Naive thymus-derived CD4-positive, alpha-beta T cell (primary cell): ENCODE measurements at regions of chr11 and their contacts with region 1.

Region 1: DNA sequence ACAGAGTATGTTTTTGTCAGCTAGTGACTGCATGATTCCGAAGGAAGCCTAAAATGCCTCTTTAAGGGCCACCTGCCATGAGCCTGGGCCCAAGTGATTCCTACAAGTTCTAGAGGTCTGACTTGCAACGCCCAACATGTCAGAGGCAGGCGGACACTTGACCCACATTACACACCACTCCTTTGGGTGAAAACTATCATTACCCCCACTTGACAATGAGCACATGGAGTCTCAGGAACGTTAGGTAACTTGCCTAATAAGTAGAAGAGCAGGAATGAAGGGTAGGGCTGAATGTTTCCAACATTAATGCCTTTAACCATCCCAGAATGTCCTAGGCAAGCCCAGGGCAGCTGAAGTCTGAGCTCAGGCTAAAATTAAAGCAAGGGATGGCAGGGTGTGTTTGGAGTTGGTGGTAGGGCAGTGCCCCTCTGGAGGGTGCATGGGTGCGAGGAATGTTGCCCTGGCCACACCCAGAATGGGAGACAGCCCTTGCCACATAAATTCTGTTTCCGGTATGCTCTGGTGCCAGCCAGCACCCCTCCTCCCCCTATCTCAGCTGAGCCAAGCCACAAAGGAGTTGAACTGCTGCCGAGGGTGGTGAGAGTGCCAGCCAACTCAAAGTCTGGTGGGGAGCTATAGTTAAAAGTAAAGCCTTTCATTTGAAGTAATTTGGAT is 2.5 kb downstream of the PLAAT2 start:
- DNase-seq: peak in 7 of 9 donors; percentile 45 to 61 (median 51)
- ATAC-seq: peak; percentile 80
- H3K4me3 ChIP-seq: no peak overlapping the region
- H3K4me3 Mint-ChIP-seq: peak overlapping the region in 9 of 10 donors; percentile 66 to 80 (median 79)
- H3K27ac ChIP-seq: peak overlapping the region; percentile 56
- H3K27ac Mint-ChIP-seq: peak overlapping the region; percentile 16 to 95 (median 85)
- H3K4me1 ChIP-seq: peaks cover 24 to 44% of the 10 kb centered on the region in 2 donors
- H3K4me1 Mint-ChIP-seq: peaks cover 38 to 85% (median 70%) of the 10 kb centered on the region in 7 donors
- H3K27me3 ChIP-seq: no peaks in the 10 kb centered on the region
- H3K27me3 Mint-ChIP-seq: no peaks in the 10 kb centered on the region

Region 2: GRCh38 chr11:63530021-63530420 is 30.6 kb before region 1 on chr11:
- CTCF ChIA-PET with region 1: no interaction called
- POLR2A ChIA-PET with region 1: interaction called, 5 read pairs
- intact Hi-C with region 1: loop called in 1 of 2 experiments (anchors 2 kb)
- DNase-seq: no peak
- ATAC-seq: no peak
- H3K4me3 ChIP-seq: no peak overlapping the region
- H3K4me3 Mint-ChIP-seq: peak overlapping the region in 7 of 10 donors; percentile 17 to 55 (median 39)
- H3K27ac ChIP-seq: peak overlapping the region; percentile 41
- H3K27ac Mint-ChIP-seq: peak overlapping the region; percentile 60 to 90 (median 85)
- H3K4me1 ChIP-seq: peaks cover 39 to 52% of the 10 kb centered on the region in 2 donors
- H3K4me1 Mint-ChIP-seq: peaks cover 35 to 69% (median 67%) of the 10 kb centered on the region in 7 donors
- H3K27me3 ChIP-seq: no peaks in the 10 kb centered on the region
- H3K27me3 Mint-ChIP-seq: peaks cover 0 to 2% (median 0%) of the 10 kb centered on the region in 5 donors